Heart left ventricle (tissue), 16 donors: ENCODE measurements at regions of chr12 and their contacts with region 1.

Region 1: DNA sequence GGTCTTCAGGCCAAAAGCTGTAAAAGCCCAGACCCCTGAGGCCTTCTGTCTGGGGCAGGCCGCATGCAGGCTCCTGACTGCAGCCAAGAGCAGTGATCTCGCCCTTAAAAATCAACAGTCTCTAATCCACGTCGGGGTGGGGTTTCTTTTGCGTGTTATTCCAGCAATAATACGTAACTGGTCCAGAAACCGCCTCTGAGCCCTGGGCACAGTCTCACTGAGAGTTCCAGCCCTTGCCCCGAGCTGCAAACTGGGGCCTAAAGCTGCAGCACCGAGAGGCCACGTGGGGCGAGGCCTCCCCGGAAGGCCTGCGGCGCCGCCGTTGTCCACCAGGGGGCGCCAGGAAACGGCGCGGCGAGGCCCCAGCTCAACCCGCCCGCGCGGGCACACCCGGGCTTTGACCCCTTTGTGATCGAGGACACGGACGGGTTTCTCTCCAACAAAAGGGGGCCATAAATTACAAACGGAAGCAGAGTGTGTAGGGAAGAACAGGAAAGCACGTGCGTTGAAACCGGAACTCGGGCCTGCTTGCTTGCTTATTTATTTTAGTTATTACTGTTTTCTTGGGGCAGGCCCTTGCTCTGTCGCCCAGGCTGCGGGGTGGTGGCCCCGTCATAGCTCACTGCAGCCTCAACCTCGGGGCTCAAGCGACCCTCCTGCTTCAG is 87.2 kb downstream of the NINJ2 start:
- DNase-seq: peak; percentile 77 to 92 (median 82)
- ATAC-seq: peak; percentile 17 to 68 (median 52)
- H3K4me3 ChIP-seq: peak overlapping the region in 6 of 12 donors; percentile 12 to 34 (median 20)
- H3K27ac ChIP-seq: peak overlapping the region; percentile 11 to 98 (median 66)
- H3K4me1 ChIP-seq: peaks cover 15 to 71% (median 48%) of the 10 kb centered on the region in 12 donors
- H3K27me3 ChIP-seq: no peaks in the 10 kb centered on the region
- CTCF ChIP-seq: peak; percentile 98 to 100 (median 100)
- POLR2A ChIP-seq: no peak

Region 2: GRCh38 chr12:630656-631632 is 54.9 kb after region 1 on chr12:
- intact Hi-C with region 1: loop called in 2 of 10 experiments (anchors 5 kb)
- DNase-seq: peak; percentile 62 to 91 (median 83)
- ATAC-seq: peak; percentile 52 to 87 (median 70)
- H3K4me3 ChIP-seq: peak overlapping the region in 9 of 12 donors; percentile 25 to 67 (median 40)
- H3K27ac ChIP-seq: peak overlapping the region; percentile 76 to 93 (median 87)
- H3K4me1 ChIP-seq: peaks cover 0 to 77% (median 44%) of the 10 kb centered on the region in 12 donors
- H3K27me3 ChIP-seq: no peaks in the 10 kb centered on the region
- CTCF ChIP-seq: no peak
- POLR2A ChIP-seq: peak in 1 of 2 donors; percentile 46

Region 3: GRCh38 chr12:712172-712863 is 136.2 kb after region 1 on chr12:
- intact Hi-C with region 1: loop called in 1 of 10 experiments (anchors 10 kb)
- DNase-seq: no peak
- ATAC-seq: no peak
- H3K4me3 ChIP-seq: no peak overlapping the region
- H3K27ac ChIP-seq: peak overlapping the region in 9 of 12 donors; percentile 10 to 89 (median 68)
- H3K4me1 ChIP-seq: peaks cover 0 to 25% (median 5%) of the 10 kb centered on the region in 12 donors
- H3K27me3 ChIP-seq: no peaks in the 10 kb centered on the region
- CTCF ChIP-seq: no peak
- POLR2A ChIP-seq: no peak

Region 4: DNA sequence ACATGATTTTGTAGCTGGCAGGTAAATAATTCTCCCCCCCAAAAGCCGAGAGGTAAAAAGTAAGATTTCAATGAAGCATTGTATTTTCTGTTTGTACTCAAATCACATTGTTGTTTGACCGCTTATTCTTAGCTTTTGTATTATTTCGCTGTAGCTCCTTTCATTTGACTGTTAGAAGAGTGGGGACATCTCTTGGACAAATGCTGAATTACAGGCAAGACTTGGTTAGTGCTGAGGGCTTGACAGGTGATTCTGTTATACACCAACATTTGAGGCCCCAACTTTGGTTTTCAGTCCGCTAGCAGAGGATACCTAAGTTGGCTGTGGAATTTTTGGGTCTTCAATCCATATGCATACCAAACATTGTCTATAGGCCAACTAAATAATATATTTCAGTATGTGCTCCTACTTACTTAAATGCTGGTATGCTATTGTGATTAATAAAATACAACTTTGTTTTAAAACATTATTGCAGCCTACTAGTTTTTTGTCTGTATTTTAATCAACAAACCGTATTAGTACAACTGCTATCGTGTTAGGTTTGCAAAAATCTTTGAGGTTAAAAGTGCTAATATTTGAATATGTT is 517.2 kb after region 1 on chr12:
- intact Hi-C with region 1: loop called in 1 of 10 experiments (anchors 10 kb)
- DNase-seq: peak in 1 of 5 donors; percentile 16
- ATAC-seq: peak in 3 of 4 donors; percentile 63 to 69 (median 67)
- H3K4me3 ChIP-seq: no peak overlapping the region
- H3K27ac ChIP-seq: no peak overlapping the region
- H3K4me1 ChIP-seq: peaks cover 0 to 17% (median 4%) of the 10 kb centered on the region in 12 donors
- H3K27me3 ChIP-seq: no peaks in the 10 kb centered on the region
- CTCF ChIP-seq: peak; percentile 54 to 80 (median 74)
- POLR2A ChIP-seq: no peak

Region 5: GRCh38 chr12:1605129-1606020 is 1029.3 kb after region 1 on chr12:
- intact Hi-C with region 1: loop called in 1 of 10 experiments (anchors 10 kb)
- DNase-seq: peak; percentile 74 to 83 (median 79)
- ATAC-seq: peak; percentile 77 to 87 (median 84)
- H3K4me3 ChIP-seq: peak overlapping the region in 11 of 12 donors; percentile 24 to 70 (median 54)
- H3K27ac ChIP-seq: peak overlapping the region; percentile 82 to 97 (median 92)
- H3K4me1 ChIP-seq: peaks cover 0 to 52% (median 13%) of the 10 kb centered on the region in 12 donors
- H3K27me3 ChIP-seq: no peaks in the 10 kb centered on the region
- CTCF ChIP-seq: peak; percentile 65 to 92 (median 78)
- POLR2A ChIP-seq: peak in 1 of 2 donors; percentile 48

Region 6: GRCh38 chr12:1706633-1706981 is 1130.5 kb after region 1 on chr12:
- intact Hi-C with region 1: no loop called
- DNase-seq: no peak
- ATAC-seq: no peak
- H3K4me3 ChIP-seq: no peak overlapping the region
- H3K27ac ChIP-seq: no peak overlapping the region
- H3K4me1 ChIP-seq: peaks cover 0 to 68% (median 12%) of the 10 kb centered on the region in 12 donors
- H3K27me3 ChIP-seq: no peaks in the 10 kb centered on the region
- CTCF ChIP-seq: no peak
- POLR2A ChIP-seq: no peak